ENCODE measurements at regions of chr11 and their contacts with region 1.

Region 1: GRCh38 chr11:64688534-64688982 is 34.4 kb downstream of the NRXN2 start:
- DNase-seq: peak; percentile 92
- CTCF ChIP-seq: peak; percentile 82

Region 2: GRCh38 chr11:64675450-64676260 is 12.9 kb before region 1 on chr11:
- CTCF ChIA-PET with region 1: interaction called, 29 read pairs
- POLR2A ChIA-PET with region 1: no interaction called
- DNase-seq: peak; percentile 60
- CTCF ChIP-seq: no peak

Region 3: GRCh38 chr11:64716473-64717267 is 28.1 kb after region 1 on chr11:
- CTCF ChIA-PET with region 1: interaction called, 30 read pairs
- POLR2A ChIA-PET with region 1: no interaction called
- DNase-seq: no peak
- CTCF ChIP-seq: no peak

Region 4: GRCh38 chr11:64734811-64735724 is 46.5 kb after region 1 on chr11:
- CTCF ChIA-PET with region 1: interaction called, 13 read pairs
- POLR2A ChIA-PET with region 1: no interaction called
- DNase-seq: no peak
- CTCF ChIP-seq: no peak

Measured in GM10248 (cell line).